ENCODE measurements at regions of chr21 and their contacts with region 1.

Region 1: GRCh38 chr21:15221799-15222386 is 157.1 kb upstream of the NRIP1 start:
- DNase-seq: peak; percentile 50 to 57
- ATAC-seq: peak; percentile 97 to 99 (median 98)
- H3K4me3 ChIP-seq: no peak overlapping the region
- H3K27ac ChIP-seq: peak overlapping the region; percentile 55
- H3K4me1 ChIP-seq: peaks cover 26% of the 10 kb centered on the region
- H3K27me3 ChIP-seq: no peaks in the 10 kb centered on the region
- CTCF ChIP-seq: no peak

Region 2: DNA sequence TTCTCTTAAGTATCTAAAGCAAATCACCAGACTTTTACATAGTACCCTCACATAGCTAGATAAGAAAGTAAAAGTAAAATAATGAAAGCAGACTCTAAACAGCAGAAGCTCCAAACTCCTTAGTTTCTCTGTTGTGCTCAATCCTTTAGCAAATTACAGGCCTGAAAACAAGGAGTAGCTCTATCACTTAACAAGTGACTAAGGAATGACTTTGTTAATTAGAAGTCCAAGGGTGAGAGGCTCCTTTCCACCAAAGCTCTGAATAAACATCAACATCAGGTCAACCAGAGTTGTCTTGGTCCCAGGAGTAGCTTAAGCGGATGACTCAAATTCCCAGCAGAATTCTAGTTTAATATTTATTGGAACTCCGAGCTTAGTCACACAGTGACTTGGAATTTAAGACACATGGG is 163.0 kb before region 1 on chr21:
- intact Hi-C with region 1: loop called in 1 of 2 experiments (anchors 5 kb)
- DNase-seq: no peak
- ATAC-seq: peak; percentile 25 to 70 (median 32)
- H3K4me3 ChIP-seq: peak overlapping the region; percentile 29
- H3K27ac ChIP-seq: peak overlapping the region; percentile 34
- H3K4me1 ChIP-seq: peaks cover 92% of the 10 kb centered on the region
- H3K27me3 ChIP-seq: no peaks in the 10 kb centered on the region
- CTCF ChIP-seq: no peak

Region 3: DNA sequence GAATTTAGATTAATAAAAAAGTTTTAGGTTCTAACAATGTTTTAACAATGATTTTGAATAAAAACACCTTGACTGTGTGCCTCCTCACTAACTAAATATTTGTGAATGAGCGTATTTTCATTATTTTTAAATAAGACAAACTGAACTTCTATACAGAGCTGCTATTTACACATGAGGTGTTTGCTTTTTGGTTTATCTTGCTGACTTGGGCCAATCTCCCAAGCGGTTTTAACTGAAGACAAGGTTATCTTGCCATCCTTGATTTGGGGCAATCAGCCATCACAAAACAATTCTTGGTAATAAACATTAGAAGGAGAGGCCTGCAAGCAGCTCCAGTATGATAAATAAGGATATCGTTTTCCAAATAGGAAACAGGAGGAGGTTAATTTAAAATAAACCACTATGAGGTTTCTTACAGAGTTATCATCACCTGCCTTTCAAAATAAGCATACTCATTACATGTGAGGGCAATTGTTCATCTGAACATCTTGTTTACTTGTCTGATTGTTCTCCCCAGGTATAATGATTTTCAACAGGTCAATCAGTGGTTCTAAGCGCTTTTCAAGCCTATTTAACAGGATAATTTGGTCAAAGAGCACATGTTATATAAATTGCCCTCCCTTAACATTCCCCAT is 48.8 kb before region 1 on chr21:
- intact Hi-C with region 1: no loop called
- DNase-seq: no peak
- ATAC-seq: no peak
- H3K4me3 ChIP-seq: no peak overlapping the region
- H3K27ac ChIP-seq: no peak overlapping the region
- H3K4me1 ChIP-seq: no peaks in the 10 kb centered on the region
- H3K27me3 ChIP-seq: no peaks in the 10 kb centered on the region
- CTCF ChIP-seq: no peak

Region 4: GRCh38 chr21:15206514-15206913 is 15.4 kb before region 1 on chr21:
- intact Hi-C with region 1: no loop called
- DNase-seq: no peak
- ATAC-seq: no peak
- H3K4me3 ChIP-seq: no peak overlapping the region
- H3K27ac ChIP-seq: no peak overlapping the region
- H3K4me1 ChIP-seq: no peaks in the 10 kb centered on the region
- H3K27me3 ChIP-seq: no peaks in the 10 kb centered on the region
- CTCF ChIP-seq: no peak